Activated naive CD4-positive, alpha-beta T cell treated with anti-CD3 and anti-CD28 coated beads for 36 hours (primary cell): ENCODE measurements at regions of chr14 and their contacts with region 1.

Region 1: DNA sequence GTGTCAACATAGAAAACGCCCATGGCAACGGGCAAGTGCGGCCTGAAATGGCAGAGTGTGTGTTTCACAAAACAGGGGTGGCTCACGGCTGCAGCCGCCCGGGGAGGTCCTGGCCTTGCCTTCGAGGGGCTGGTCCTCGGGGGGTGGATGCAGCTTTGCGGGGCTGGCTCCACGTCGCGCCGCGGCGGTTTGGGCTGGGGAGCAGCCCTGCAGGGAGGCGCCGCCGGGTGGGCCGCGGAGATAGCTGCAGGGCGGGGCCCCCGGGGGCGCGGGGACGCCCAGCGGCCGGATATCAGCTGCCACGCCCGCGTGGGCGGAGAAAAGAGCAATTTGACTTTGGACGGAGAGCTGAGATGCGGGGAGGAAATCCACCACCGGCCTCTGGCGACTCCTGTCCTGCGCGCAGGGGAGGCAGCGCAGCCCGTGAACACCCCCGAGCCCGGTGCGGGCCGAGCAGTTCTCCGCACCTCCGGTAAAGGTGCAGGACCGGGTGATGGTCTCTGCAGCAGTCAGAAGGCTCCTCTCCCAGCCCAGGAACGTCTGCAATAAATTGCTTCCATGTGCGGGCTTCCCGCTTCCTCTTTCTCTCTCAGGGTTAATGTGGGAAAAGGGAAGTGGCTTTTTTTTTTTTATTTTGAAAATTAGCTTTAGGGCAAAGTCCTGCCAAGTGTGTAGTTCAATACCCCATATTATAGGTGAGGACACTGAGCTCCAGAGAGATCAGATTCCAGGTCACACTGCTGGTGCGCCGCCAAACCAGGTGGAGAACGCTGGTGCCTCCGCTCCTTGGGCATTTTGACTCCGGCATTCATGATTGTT is 110.5 kb downstream of the ARF6 start:
- DNase-seq: peak; percentile 86
- H3K4me3 Mint-ChIP-seq: peak overlapping the region; percentile 92
- H3K27ac Mint-ChIP-seq: peak overlapping the region; percentile 98
- H3K4me1 Mint-ChIP-seq: peaks cover 42% of the 10 kb centered on the region
- H3K27me3 Mint-ChIP-seq: no peaks in the 10 kb centered on the region

Region 2: GRCh38 chr14:49620182-49621113 is 383.0 kb before region 1 on chr14 and contains the starts of genes MGAT2 and RPL36AL:
- CTCF ChIA-PET with region 1: no interaction called
- intact Hi-C with region 1: loop called (anchors 2 kb)
- DNase-seq: peak; percentile 97
- H3K4me3 Mint-ChIP-seq: peak within 1 kb of the TSS; percentile 97
- H3K27ac Mint-ChIP-seq: peak within 1 kb of the TSS; percentile 97
- H3K4me1 Mint-ChIP-seq: peaks cover 52% of the 10 kb centered on the region
- H3K27me3 Mint-ChIP-seq: no peaks in the 10 kb centered on the region
- total RNA-seq, gene MGAT2: 20.6 to 20.7 TPM
- total RNA-seq, gene RPL36AL: 250 to 266 TPM

Region 3: DNA sequence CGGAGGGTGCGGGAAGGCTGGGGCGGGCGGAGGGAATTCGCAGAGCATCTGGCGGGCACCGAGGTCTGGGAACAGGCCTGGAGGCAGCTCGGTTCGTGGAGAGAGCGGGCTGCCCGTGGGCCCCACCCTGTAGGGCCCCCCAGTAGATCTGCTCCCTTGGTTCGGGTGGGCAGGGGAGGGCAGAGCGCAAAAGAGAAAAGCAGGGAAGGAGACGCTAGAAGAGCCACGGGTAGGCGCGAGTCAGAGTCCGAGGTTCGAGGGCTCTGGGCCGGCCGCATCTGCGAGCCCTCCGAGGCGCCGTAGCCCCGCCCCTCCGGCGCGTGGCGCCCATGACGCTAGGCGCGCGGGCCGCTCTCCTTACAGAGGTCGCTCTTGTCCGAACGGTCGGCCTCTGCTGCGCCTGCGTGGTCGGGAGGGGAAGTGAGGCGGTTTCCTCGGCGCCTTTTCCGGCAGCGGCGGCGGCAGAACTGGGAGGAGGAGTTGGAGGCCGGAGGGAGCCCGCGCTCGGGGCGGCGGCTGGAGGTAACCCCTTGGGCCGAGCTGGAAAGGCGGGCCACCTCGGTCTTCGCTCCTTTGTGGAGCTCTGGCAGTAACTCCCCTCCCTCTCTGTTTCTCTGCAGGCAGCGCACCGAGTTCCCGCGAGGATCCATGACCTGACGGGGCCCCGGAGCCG is 110.7 kb before region 1 on chr14 and contains the start of gene ARF6:
- CTCF ChIA-PET with region 1: interaction called, 3 read pairs
- intact Hi-C with region 1: loop called (anchors 1 kb)
- DNase-seq: peak; percentile 98
- H3K4me3 Mint-ChIP-seq: peak within 1 kb of the TSS; percentile 100
- H3K27ac Mint-ChIP-seq: peak within 1 kb of the TSS; percentile 100
- H3K4me1 Mint-ChIP-seq: peaks cover 19% of the 10 kb centered on the region
- H3K27me3 Mint-ChIP-seq: no peaks in the 10 kb centered on the region
- total RNA-seq, gene ARF6: 128 to 129 TPM

Region 4: DNA sequence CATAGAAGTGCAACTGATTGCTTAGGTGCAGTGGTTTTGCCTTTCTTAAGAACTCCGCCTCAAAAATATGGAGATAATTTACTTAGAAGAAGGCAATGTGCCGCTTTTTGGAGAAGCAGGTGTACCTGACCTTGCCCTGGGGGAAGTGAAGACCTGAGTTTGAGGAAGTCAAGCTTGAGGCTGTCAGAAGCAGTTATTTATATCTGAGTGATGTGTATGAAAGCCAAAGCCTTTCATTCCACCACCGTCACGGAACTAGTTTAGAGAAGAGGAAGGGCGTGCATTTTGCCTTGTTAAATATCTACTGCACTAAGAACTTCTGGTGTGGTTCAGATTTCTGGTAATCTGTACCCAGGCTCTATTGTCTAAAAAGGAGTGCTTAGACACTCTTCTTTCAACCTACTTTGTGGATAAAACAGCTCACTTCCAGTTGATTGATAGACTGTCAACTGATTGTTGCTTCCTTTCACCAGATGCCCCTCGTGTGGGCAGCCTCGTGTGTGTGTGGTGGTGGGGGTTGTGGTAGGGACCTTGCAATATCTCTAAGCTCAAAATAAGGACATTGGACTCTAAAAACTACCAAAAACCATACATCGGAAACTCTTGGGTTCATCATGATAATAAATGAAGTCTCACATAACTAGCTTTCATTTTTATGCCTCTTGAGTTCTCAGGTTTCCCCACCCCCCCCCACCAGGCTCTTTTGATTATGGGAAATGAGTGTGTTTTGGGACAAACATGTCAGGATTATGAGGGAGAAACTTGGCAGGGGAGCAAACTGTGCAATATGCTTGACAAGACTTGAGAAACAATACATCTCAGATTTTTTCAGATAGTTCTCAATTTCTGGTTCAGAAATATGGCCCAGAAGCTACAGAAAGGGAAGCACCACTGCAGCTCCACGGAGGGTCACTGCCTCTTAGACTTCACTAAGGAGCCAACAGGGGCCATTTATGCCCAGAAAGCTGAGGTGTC is 32.0 kb before region 1 on chr14:
- CTCF ChIA-PET with region 1: interaction called, 27 read pairs
- intact Hi-C with region 1: loop called (anchors 1 kb)
- DNase-seq: peak; percentile 69
- H3K4me3 Mint-ChIP-seq: peak overlapping the region; percentile 73
- H3K27ac Mint-ChIP-seq: peak overlapping the region; percentile 97
- H3K4me1 Mint-ChIP-seq: peaks cover 59% of the 10 kb centered on the region
- H3K27me3 Mint-ChIP-seq: no peaks in the 10 kb centered on the region

Region 5: DNA sequence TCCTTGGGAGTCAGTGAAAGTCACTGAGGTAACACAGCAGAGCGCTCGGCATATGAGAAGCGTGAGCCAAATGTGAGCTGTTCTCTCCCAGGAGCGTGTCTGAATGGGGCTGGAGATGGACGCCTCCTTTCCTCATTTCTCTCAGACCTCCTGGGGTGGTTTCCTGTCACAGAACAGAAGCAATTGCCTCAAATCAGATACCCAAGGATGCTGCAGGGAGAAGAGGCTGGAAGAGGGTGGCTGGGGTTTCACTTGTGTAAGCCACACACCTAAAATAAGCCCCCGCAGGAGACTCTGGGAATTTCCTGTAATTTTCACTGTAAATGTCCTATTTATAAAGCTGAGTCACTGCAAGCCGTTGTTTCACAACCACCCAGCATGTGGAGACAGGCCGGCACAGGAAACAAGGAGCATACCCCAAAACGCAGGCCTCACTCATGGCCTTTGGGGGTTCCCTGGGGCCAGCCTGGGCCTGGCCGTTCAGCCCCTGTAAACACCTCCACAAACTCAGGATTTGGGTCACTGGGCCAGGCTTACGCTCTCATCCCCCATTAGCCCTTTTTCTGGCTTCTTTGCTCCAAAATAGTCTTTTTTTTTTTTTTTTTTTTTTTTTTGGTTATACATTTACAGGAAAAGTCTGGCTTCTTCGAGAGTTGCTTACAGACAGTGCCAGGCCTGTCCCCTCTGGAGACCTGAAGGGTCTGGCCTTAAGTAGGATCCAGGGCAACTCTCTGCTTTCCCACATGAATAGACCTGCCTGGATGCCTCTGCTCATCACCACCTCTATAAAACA is 57.6 kb after region 1 on chr14:
- CTCF ChIA-PET with region 1: interaction called, 12 read pairs
- intact Hi-C with region 1: loop called (anchors 1 kb)
- DNase-seq: peak; percentile 64
- H3K4me3 Mint-ChIP-seq: peak overlapping the region; percentile 85
- H3K27ac Mint-ChIP-seq: peak overlapping the region; percentile 98
- H3K4me1 Mint-ChIP-seq: peaks cover 75% of the 10 kb centered on the region
- H3K27me3 Mint-ChIP-seq: no peaks in the 10 kb centered on the region

Region 6: GRCh38 chr14:50311975-50312733 is 308.7 kb after region 1 on chr14 and contains the starts of genes DMAC2L and L2HGDH:
- CTCF ChIA-PET with region 1: no interaction called
- intact Hi-C with region 1: loop called (anchors 2 kb)
- DNase-seq: peak; percentile 89
- H3K4me3 Mint-ChIP-seq: peak within 1 kb of the TSS; percentile 94
- H3K27ac Mint-ChIP-seq: peak within 1 kb of the TSS; percentile 95
- H3K4me1 Mint-ChIP-seq: peaks cover 41% of the 10 kb centered on the region
- H3K27me3 Mint-ChIP-seq: no peaks in the 10 kb centered on the region
- total RNA-seq, gene DMAC2L: 11.7 to 13.7 TPM
- total RNA-seq, gene L2HGDH: 13.5 to 14.3 TPM